ENCODE measurements at regions of chr12 and their contacts with region 1.

Region 1: DNA sequence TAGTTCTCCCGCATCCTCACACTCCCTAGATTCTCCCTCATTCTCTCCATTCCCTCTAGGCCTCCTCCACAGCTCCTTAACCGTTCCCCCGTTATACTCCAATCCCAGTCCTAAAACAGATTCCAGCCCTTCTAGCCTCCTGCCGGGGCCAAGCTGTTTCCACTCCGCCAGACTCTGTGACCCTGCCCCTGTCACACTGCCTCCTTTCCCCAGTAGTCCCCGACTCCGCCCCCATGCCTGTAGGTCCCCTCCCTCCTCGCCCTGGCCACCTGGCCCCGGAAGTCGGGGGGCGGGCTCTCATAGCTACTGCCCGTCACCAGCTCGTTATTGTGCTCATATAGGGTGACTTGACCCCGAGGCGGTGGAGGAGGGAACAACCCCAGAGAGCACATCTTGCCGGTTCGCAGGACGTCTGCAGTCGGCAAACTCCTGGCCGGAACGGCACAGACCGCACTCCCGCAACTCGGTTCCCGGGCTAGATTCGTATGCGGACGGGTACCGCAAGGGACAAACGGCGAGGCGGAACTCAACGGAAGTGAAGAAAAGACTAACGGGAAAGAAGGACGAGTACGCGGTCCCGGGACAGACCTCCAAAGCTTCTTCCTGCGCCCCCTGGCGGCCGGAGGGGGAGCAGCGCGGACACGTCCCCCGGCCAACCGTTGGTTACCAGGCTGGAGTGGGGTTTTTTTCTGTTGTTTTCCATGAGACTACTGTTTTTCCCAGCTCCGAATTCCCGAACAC is at the start of gene AAAS:
- DNase-seq: peak; percentile 86
- ATAC-seq: peak; percentile 85
- H3K4me3 ChIP-seq: peak within 1 kb of the TSS; percentile 82
- H3K27ac ChIP-seq: peak within 1 kb of the TSS; percentile 95
- H3K4me1 ChIP-seq: peaks cover 24% of the 10 kb centered on the region
- H3K27me3 ChIP-seq: no peaks in the 10 kb centered on the region; a peak in 1 of 4 replicates
- CTCF ChIP-seq: peak; percentile 98 to 99 (median 99); a peak in 5 of 6 replicates
- EP300 ChIP-seq: no peak
- POLR2A ChIP-seq: peak; percentile 94
- RAD21 ChIP-seq: peak; percentile 36; the same call in 1 of the 2 replicates
- polyA plus RNA-seq, gene AAAS: 58.6 to 71.5 TPM

Region 2: GRCh38 chr12:52913076-52913821 is 408.0 kb before region 1 on chr12:
- CTCF ChIA-PET with region 1: no interaction called
- POLR2A ChIA-PET with region 1: no interaction called
- RAD21 ChIA-PET with region 1: no interaction called
- SMC1A ChIA-PET with region 1: no interaction called
- in situ Hi-C with region 1: no loop called
- intact Hi-C with region 1: no loop called
- DNase-seq: no peak
- ATAC-seq: no peak
- H3K4me3 ChIP-seq: no peak overlapping the region
- H3K27ac ChIP-seq: no peak overlapping the region
- H3K4me1 ChIP-seq: 0 out of 2 replicates have a peak, but pooled peaks cover under 1% of the 10 kb centered on the region
- H3K27me3 ChIP-seq: peaks cover 0 to 3% of the 10 kb centered on the region in 2 experiments; a peak in 2 of 4 replicates
- CTCF ChIP-seq: no peak
- EP300 ChIP-seq: no peak
- POLR2A ChIP-seq: no peak
- RAD21 ChIP-seq: no peak

Region 3: DNA sequence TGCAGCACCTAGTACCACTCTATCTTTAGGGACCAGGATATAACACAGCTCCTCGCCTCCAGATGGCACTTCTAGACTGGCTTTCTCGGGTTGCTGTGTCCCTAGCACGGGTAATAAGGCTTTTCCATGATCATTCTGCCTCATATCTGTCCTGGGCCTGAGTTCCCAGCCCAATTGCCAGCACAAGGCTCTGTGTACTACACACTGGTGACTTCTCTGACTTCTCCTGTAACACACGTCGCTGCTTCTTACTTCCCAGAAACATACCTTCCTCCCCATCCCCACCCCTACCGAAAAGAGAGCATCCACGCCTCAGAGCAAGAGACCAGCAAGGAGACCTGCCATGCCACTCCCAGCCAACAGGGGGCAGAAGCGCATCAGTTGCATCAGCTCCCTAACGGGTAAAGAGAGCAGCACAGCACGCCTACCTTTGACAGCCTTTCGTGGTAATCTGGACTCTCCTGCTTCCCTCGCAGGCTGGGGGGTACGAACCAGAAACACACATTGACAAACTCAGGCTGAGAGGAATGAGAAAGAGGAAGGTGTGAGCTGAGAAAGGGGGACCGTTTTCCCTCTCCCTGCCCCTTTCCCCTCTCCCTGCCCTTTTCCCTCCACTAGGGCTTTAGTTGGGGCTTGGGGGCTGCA is 161.9 kb before region 1 on chr12:
- CTCF ChIA-PET with region 1: interaction called, 55 read pairs
- POLR2A ChIA-PET with region 1: no interaction called
- RAD21 ChIA-PET with region 1: interaction called, 33 read pairs
- SMC1A ChIA-PET with region 1: interaction called, 25 read pairs
- in situ Hi-C with region 1: no loop called
- intact Hi-C with region 1: loop called (anchors 1 kb)
- DNase-seq: peak; percentile 72
- ATAC-seq: peak; percentile 99
- H3K4me3 ChIP-seq: no peak overlapping the region
- H3K27ac ChIP-seq: no peak overlapping the region
- H3K4me1 ChIP-seq: no peaks in the 10 kb centered on the region; the same call in 1 of the 2 replicates
- H3K27me3 ChIP-seq: no peaks in the 10 kb centered on the region
- CTCF ChIP-seq: peak; percentile 97 to 100 (median 99)
- EP300 ChIP-seq: no peak
- POLR2A ChIP-seq: no peak
- RAD21 ChIP-seq: peak; percentile 99

Region 4: GRCh38 chr12:53220801-53221202 is 100.4 kb before region 1 on chr12:
- CTCF ChIA-PET with region 1: interaction called, 87 read pairs
- POLR2A ChIA-PET with region 1: no interaction called
- RAD21 ChIA-PET with region 1: interaction called, 22 read pairs
- SMC1A ChIA-PET with region 1: interaction called, 8 read pairs
- in situ Hi-C with region 1: no loop called
- intact Hi-C with region 1: no loop called
- DNase-seq: peak; percentile 69
- ATAC-seq: peak; percentile 86
- H3K4me3 ChIP-seq: peak overlapping the region; percentile 86
- H3K27ac ChIP-seq: peak overlapping the region; percentile 79
- H3K4me1 ChIP-seq: peaks cover 22% of the 10 kb centered on the region
- H3K27me3 ChIP-seq: no peaks in the 10 kb centered on the region
- CTCF ChIP-seq: no peak
- EP300 ChIP-seq: no peak
- POLR2A ChIP-seq: no peak
- RAD21 ChIP-seq: no peak

Region 5: DNA sequence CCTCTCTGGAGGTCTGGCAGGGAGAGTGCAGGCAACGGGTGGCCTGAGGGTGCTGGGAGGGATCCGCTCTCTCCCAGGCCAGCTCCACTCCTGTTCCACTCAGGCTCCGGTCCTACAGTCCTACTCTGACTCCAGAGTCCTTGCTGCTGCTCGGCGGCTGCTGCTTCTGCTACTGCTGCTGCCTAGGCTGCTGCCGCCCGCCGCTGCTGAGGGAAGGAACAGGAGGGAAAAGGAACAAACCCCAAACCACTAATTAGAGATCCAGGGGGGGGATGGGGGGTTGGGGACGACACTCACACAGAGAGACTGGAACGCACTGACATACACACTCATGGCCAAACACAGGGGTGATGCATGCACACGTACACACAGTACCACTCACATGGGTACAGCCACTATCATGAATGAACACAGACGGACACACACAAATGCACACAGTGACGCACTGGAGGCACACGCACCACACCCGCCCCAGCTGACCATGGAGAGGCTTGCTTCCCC is 15.0 kb after region 1 on chr12 and contains the start of gene SP7:
- CTCF ChIA-PET with region 1: interaction called, 30 read pairs
- POLR2A ChIA-PET with region 1: no interaction called
- RAD21 ChIA-PET with region 1: interaction called, 3 read pairs
- SMC1A ChIA-PET with region 1: interaction called, 8 read pairs
- in situ Hi-C with region 1: no loop called
- intact Hi-C with region 1: no loop called
- DNase-seq: no peak
- ATAC-seq: peak; percentile 71
- H3K4me3 ChIP-seq: no peak within 1 kb of the TSS
- H3K27ac ChIP-seq: no peak within 1 kb of the TSS
- H3K4me1 ChIP-seq: peaks cover 5% of the 10 kb centered on the region; the same call in 1 of the 2 replicates
- H3K27me3 ChIP-seq: peaks cover 2 to 10% of the 10 kb centered on the region in 2 experiments; a peak in 3 of 4 replicates
- CTCF ChIP-seq: no peak
- EP300 ChIP-seq: no peak
- POLR2A ChIP-seq: no peak
- RAD21 ChIP-seq: no peak
- polyA plus RNA-seq, gene SP7: 0.05 TPM in 1 of 2 experiments, not detected in the other

Region 6: GRCh38 chr12:53379389-53380103 is 58.3 kb after region 1 on chr12:
- CTCF ChIA-PET with region 1: interaction called, 32 read pairs
- POLR2A ChIA-PET with region 1: interaction called, 16 read pairs
- RAD21 ChIA-PET with region 1: interaction called, 18 read pairs
- SMC1A ChIA-PET with region 1: interaction called, 8 read pairs
- in situ Hi-C with region 1: no loop called
- intact Hi-C with region 1: no loop called
- DNase-seq: peak; percentile 100
- ATAC-seq: peak; percentile 84
- H3K4me3 ChIP-seq: peak overlapping the region; percentile 62
- H3K27ac ChIP-seq: peak overlapping the region; percentile 89
- H3K4me1 ChIP-seq: peaks cover 25% of the 10 kb centered on the region
- H3K27me3 ChIP-seq: no peaks in the 10 kb centered on the region
- CTCF ChIP-seq: no peak
- EP300 ChIP-seq: no peak
- POLR2A ChIP-seq: peak; percentile 97
- RAD21 ChIP-seq: no peak

Region 7: GRCh38 chr12:53476769-53477209 is 155.5 kb after region 1 on chr12:
- CTCF ChIA-PET with region 1: interaction called, 13 read pairs
- POLR2A ChIA-PET with region 1: no interaction called
- RAD21 ChIA-PET with region 1: interaction called, 3 read pairs
- SMC1A ChIA-PET with region 1: interaction called, 3 read pairs
- in situ Hi-C with region 1: no loop called
- intact Hi-C with region 1: no loop called
- DNase-seq: no peak
- ATAC-seq: peak; percentile 60
- H3K4me3 ChIP-seq: no peak overlapping the region
- H3K27ac ChIP-seq: no peak overlapping the region
- H3K4me1 ChIP-seq: 0 out of 2 replicates have a peak, but pooled peaks cover 2% of the 10 kb centered on the region
- H3K27me3 ChIP-seq: no peaks in the 10 kb centered on the region
- CTCF ChIP-seq: peak in 2 of 3 experiments; percentile 10 to 34; a peak in 2 of 6 replicates
- EP300 ChIP-seq: no peak
- POLR2A ChIP-seq: no peak
- RAD21 ChIP-seq: no peak

Region 8: GRCh38 chr12:53645165-53645564 is 323.9 kb after region 1 on chr12:
- CTCF ChIA-PET with region 1: no interaction called
- POLR2A ChIA-PET with region 1: no interaction called
- RAD21 ChIA-PET with region 1: no interaction called
- SMC1A ChIA-PET with region 1: no interaction called
- in situ Hi-C with region 1: no loop called
- intact Hi-C with region 1: no loop called
- DNase-seq: no peak
- ATAC-seq: no peak
- H3K4me3 ChIP-seq: no peak overlapping the region
- H3K27ac ChIP-seq: no peak overlapping the region
- H3K4me1 ChIP-seq: no peaks in the 10 kb centered on the region
- H3K27me3 ChIP-seq: no peaks in the 10 kb centered on the region
- CTCF ChIP-seq: no peak
- EP300 ChIP-seq: no peak
- POLR2A ChIP-seq: no peak
- RAD21 ChIP-seq: no peak